K562 (cell line): ENCODE measurements at regions of chr2 and their contacts with region 1.

Region 1: GRCh38 chr2:219498280-219499057 is at the start of gene GMPPA:
- DNase-seq: peak; percentile 74 to 95 (median 85)
- ATAC-seq: peak; percentile 85
- H3K4me3 ChIP-seq: peak within 1 kb of the TSS; percentile 64
- H3K27ac ChIP-seq: peak within 1 kb of the TSS; percentile 95
- H3K4me1 ChIP-seq: peaks cover 47 to 60% of the 10 kb centered on the region in 2 experiments
- H3K27me3 ChIP-seq: no peaks in the 10 kb centered on the region
- CTCF ChIP-seq: no peak
- EP300 ChIP-seq: no peak; the same call in 1 of the 2 replicates
- POLR2A ChIP-seq: peak; percentile 80
- RAD21 ChIP-seq: no peak; a peak in 1 of 4 replicates
- polyA plus RNA-seq, gene GMPPA: 7.0 to 24.7 TPM

Region 2: DNA sequence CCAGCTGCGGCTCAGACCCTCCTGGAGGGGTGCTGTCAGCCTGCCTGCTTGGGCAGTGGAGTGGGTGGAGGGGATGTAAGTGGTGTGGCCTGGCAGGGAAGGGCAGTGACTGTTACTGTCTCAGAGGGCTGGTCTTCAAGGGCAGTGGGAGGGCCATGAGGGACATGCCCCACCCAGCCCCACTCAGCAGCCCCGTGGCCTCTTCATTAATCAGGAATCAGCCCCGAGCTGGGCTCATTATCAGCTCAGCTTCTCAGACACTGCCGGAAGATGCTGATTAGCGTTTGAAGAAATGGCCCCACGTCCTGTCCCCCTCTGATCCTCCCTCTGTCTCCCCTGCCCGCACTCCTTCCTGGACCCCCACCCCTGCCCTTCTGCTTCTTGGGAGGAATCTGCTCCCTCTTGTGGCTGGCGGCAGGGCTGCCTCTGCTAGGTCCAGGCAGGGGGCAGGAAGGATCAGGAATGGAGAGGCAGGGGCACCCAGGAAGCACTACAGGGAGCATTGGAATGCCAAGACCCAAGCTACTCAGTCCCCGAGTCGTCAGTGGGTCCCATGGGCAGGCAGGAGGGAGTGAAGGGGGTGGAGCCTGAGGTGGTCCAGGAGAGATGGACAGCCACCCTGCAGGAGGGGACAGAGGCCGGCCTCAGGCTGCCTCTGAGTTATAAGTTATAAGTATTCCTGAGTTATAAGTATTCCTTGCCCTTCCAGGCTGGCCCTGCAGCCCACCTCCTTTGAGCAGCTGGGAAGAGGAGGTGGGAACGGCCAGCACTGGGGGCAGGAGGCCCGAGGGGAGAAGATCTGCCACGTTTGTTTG is 22.8 kb after region 1 on chr2:
- CTCF ChIA-PET with region 1: interaction called, 7 read pairs
- POLR2A ChIA-PET with region 1: interaction called, 4 read pairs
- in situ Hi-C with region 1: loop called (anchors 5 kb)
- intact Hi-C with region 1: loop called (anchors 1 kb)
- DNase-seq: peak; percentile 70 to 93 (median 84)
- ATAC-seq: peak; percentile 74
- H3K4me3 ChIP-seq: no peak overlapping the region; the same call in 1 of the 2 replicates
- H3K27ac ChIP-seq: peak overlapping the region; percentile 89
- H3K4me1 ChIP-seq: peaks cover 73 to 88% of the 10 kb centered on the region in 2 experiments
- H3K27me3 ChIP-seq: no peaks in the 10 kb centered on the region
- CTCF ChIP-seq: peak; percentile 76 to 88 (median 79)
- EP300 ChIP-seq: peak; percentile 87
- POLR2A ChIP-seq: no peak; the same call in 1 of the 2 replicates
- RAD21 ChIP-seq: peak; percentile 67 to 73